ENCODE measurements at regions of chr5 and their contacts with region 1.

Region 1: GRCh38 chr5:159987031-159987674 is 21.8 kb upstream of the TTC1 start:
- DNase-seq: peak; percentile 71 to 83 (median 77)
- H3K4me3 ChIP-seq: peak overlapping the region; percentile 37
- H3K27ac ChIP-seq: no peak overlapping the region
- H3K4me1 ChIP-seq: no peaks in the 10 kb centered on the region
- H3K27me3 ChIP-seq: no peaks in the 10 kb centered on the region
- CTCF ChIP-seq: peak; percentile 49 to 87 (median 81)
- EP300 ChIP-seq: no peak
- POLR2A ChIP-seq: no peak

Region 2: DNA sequence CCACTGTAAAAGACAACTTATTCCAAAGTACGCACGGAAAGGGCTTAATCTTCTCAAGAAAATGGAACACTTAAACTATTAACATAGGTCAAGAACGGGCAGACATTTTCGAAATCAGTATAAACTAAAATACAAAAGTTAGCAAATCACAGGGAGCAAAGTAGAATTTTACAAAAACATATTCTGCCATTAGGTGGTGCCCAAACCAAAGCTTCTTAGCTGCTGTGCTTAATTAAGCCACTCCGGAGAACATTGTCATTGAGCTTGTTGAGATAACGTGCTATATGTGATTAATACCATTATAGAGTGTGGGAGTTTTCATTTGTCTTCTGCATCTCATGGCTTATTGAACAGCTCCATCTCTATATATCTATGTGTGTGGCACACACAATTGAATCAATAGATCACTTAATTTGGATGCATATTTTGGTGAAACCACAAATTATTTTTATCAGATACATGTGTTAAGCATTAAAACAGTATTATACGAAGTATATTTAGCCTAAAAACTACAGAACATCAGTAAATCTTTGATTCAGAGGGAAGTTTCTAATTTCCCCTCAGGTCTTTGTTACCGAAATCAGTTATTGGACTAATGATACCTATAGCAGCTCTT is 700.6 kb before region 1 on chr5:
- intact Hi-C with region 1: loop called in 1 of 4 experiments (anchors 5 kb)
- DNase-seq: no peak
- H3K4me3 ChIP-seq: no peak overlapping the region
- H3K27ac ChIP-seq: no peak overlapping the region
- H3K4me1 ChIP-seq: no peaks in the 10 kb centered on the region
- H3K27me3 ChIP-seq: no peaks in the 10 kb centered on the region
- CTCF ChIP-seq: peak in 2 of 3 donors; percentile 30 to 33
- EP300 ChIP-seq: no peak
- POLR2A ChIP-seq: no peak

Region 3: DNA sequence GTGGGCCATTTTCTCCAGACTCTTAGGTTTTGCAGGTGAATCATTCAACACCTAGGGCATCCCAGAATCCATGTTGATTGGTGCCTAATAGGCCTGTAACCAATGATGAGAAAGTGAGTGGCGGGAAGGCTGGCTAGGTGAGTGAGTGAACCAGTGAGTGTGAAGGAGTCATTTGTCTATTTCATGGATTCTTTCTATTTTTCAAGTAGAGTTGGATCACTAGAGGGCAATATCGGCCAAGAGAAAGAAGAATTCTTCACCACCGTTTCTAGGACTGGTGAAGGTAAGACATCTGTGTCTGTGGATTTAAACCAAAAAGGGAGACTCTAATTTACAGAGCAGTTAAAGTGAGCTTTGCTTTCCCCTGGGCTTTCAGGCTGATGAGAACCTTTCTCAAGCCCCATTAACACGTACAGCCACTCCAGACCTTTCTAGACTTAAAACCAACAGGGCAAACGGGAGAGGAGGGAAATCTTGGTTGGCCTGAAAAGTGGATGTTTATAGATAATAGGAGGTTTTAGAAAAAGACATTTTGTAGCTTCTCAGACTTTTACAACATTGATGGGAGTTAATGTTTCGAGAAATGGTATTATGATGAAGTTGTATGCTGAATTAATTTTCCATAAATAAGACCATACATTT is 542.6 kb before region 1 on chr5:
- intact Hi-C with region 1: loop called (anchors 2 to 5 kb)
- DNase-seq: no peak
- H3K4me3 ChIP-seq: no peak overlapping the region
- H3K27ac ChIP-seq: no peak overlapping the region
- H3K4me1 ChIP-seq: no peaks in the 10 kb centered on the region
- H3K27me3 ChIP-seq: no peaks in the 10 kb centered on the region
- CTCF ChIP-seq: peak; percentile 13 to 57 (median 53)
- EP300 ChIP-seq: no peak
- POLR2A ChIP-seq: no peak

Region 4: DNA sequence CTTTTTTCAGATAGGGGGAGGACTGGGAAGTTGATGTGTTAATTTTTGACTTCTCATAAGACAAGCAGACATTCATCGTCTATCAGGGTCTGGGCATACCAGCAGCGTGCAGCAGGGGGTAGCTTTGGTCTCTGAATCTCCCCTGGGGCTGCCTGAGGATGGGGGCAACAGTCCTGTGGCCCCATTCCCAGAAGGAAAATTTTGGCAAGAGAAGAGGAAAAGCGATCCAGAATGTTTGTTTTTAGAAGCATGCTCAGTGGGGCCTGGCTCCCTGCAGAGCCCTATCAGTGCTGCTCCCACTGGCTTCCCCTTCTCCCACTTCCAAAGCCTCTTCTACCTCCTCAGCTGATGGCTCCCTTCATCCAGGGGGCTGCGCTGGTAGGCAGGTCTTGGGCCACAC is 462.0 kb before region 1 on chr5:
- intact Hi-C with region 1: loop called in 1 of 4 experiments (anchors 10 kb)
- DNase-seq: no peak
- H3K4me3 ChIP-seq: no peak overlapping the region
- H3K27ac ChIP-seq: no peak overlapping the region
- H3K4me1 ChIP-seq: no peaks in the 10 kb centered on the region
- H3K27me3 ChIP-seq: no peaks in the 10 kb centered on the region
- CTCF ChIP-seq: no peak
- EP300 ChIP-seq: no peak
- POLR2A ChIP-seq: no peak

Region 5: GRCh38 chr5:160039810-160040470 is 52.8 kb after region 1 on chr5:
- intact Hi-C with region 1: no loop called
- DNase-seq: no peak
- H3K4me3 ChIP-seq: no peak overlapping the region
- H3K27ac ChIP-seq: no peak overlapping the region
- H3K4me1 ChIP-seq: no peaks in the 10 kb centered on the region
- H3K27me3 ChIP-seq: no peaks in the 10 kb centered on the region
- CTCF ChIP-seq: no peak
- EP300 ChIP-seq: no peak
- POLR2A ChIP-seq: no peak